Right cardiac atrium (tissue), 5 donors: ENCODE measurements at regions of chr18 and their contacts with region 1.

Region 1: DNA sequence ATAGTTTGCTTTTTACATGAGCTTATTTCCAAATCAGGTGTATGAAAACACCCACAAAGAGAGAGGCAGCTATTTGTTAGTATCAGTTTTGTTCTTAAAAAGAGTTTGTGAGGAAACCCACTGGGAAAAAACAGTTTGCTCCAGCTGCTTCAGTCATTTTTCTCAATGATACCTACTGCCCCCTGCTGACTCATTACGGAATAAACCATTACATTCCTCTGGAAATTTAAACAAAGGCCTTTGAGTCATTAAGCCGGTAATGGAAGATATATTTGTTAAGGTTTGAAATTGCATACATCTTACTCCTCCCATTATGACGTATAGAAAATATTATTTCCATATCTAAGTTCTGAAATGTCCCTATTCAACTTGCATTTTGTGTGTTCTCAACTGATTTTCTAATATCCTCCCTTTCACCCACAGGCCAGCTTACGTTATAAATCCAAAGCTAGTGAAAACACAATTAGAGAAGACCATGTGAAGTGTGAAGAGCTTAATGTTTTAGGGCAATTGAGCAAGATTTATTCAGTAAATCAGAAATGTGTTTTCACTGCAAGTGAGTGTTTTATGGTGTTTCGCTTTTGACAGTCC is 761.6 kb downstream of the DSC3 start:
- DNase-seq: no peak
- ATAC-seq: no peak
- H3K4me3 ChIP-seq: no peak overlapping the region
- H3K27ac ChIP-seq: no peak overlapping the region
- H3K4me1 ChIP-seq: no peaks in the 10 kb centered on the region
- H3K27me3 ChIP-seq: no peaks in the 10 kb centered on the region

Region 2: GRCh38 chr18:29874519-29875098 is 406.4 kb before region 1 on chr18:
- intact Hi-C with region 1: loop called in 1 of 4 experiments (anchors 10 kb)
- DNase-seq: no peak
- ATAC-seq: no peak
- H3K4me3 ChIP-seq: no peak overlapping the region
- H3K27ac ChIP-seq: no peak overlapping the region
- H3K4me1 ChIP-seq: no peaks in the 10 kb centered on the region
- H3K27me3 ChIP-seq: no peaks in the 10 kb centered on the region

Region 3: GRCh38 chr18:30139631-30140287 is 141.2 kb before region 1 on chr18:
- intact Hi-C with region 1: no loop called
- DNase-seq: no peak
- ATAC-seq: no peak
- H3K4me3 ChIP-seq: no peak overlapping the region
- H3K27ac ChIP-seq: no peak overlapping the region
- H3K4me1 ChIP-seq: no peaks in the 10 kb centered on the region
- H3K27me3 ChIP-seq: no peaks in the 10 kb centered on the region